ENCODE measurements at regions of chr9 and their contacts with region 1.

Region 1: DNA sequence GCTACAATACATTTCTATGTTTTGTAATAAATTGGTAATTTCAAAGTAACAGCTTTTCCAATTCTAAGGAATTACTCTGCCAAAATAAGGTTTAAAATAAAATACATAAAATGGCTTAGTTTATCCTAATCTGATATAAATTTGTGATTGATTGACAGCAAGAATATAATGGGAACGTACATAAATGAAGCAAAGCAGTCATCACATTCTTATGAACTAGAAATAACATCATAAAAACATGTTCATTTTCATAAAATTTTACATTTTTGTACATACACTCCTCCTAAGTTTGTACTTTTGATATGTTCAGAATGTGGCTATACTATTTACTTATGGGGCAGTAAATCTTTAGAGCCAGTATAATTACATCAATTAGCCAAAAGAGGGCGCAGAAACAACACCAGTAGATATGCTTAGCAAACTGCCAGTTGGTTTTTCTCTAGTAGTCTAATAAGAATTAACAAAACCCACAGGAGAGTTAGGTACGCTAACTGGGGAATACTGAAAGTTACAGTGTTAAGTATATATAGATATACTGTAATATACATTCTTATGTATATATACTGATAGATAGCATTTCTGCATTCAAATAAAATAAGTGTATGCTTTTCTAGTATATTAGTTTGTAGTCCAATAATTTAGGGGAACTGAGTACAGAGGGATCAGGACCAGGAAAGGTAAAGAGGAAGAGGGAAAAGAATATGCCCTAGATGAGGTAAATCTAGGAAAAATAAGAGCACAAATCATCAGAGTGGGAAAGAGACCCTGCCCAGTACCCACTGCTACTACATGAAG is 76.8 kb downstream of the ZDHHC21 start:
- DNase-seq: no peak
- CTCF ChIP-seq: peak; percentile 67

Region 2: DNA sequence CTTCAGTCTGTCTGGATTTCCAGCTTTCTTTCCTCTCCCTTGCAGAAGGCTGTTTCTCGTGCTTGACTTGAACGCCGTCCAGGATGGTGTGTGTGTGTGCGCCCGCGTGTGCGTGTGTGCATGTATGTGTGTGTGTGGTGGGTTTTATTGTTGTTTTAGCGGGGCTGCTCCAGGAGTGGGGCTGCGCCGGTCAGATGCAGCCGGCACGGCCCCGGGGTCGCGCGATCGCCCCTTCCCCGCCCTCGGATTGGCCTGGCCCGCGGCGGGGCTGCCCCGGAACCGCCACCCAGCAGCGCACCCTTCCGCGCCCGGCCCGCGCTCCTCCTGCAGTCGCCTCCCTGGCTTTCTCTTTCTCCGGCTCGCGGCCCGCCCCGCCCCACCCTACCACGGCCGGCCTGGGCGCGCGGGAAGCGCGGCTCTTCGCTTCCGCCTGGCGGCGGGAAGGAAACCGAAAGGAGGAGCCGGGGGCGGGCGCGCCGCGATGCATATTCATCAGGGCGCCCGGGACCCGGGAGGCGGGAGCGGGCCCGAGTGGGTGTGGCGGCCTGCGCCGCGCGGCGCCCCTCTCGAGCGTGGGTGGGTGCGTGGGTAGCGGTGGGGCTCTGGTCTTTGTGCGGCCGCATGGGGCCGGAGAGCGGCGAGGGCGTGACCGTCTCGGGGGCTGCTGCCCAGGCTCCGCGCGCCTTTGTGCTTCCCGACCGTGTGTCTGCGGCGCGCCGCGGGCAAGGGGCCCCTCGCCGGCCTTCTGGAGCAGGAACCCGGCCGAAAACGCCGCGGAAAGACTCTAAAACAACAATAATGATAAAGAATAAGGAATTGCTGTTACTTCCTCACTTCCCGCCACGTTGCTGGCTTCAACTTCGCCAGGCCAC is 293.9 kb before region 1 on chr9:
- CTCF ChIA-PET with region 1: no interaction called
- POLR2A ChIA-PET with region 1: no interaction called
- DNase-seq: peak; percentile 89
- CTCF ChIP-seq: no peak

Region 3: DNA sequence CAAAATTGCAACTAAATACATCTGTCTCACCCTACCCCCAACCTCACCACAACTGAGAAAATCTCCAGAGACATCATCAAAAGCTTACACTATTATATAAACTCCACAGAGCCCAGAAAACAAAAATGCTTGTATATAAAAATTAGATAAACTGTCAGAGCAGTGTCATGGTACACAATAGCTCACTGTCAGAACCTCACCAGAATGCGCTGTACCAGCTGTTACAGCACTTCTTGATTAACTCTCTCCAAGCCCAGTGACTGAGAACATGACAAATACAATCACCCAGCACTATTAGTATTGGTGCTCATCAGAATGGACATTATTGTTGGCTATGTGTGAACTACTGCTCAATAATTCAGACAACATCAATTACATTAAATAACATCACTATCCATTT is 11.1 kb after region 1 on chr9:
- CTCF ChIA-PET with region 1: interaction called, 13 read pairs
- POLR2A ChIA-PET with region 1: no interaction called
- DNase-seq: no peak
- CTCF ChIP-seq: no peak

Measured in GM10248 (cell line).